Ascending aorta (tissue), 2 donors: ENCODE measurements at regions of chr1 and their contacts with region 1.

Region 1: DNA sequence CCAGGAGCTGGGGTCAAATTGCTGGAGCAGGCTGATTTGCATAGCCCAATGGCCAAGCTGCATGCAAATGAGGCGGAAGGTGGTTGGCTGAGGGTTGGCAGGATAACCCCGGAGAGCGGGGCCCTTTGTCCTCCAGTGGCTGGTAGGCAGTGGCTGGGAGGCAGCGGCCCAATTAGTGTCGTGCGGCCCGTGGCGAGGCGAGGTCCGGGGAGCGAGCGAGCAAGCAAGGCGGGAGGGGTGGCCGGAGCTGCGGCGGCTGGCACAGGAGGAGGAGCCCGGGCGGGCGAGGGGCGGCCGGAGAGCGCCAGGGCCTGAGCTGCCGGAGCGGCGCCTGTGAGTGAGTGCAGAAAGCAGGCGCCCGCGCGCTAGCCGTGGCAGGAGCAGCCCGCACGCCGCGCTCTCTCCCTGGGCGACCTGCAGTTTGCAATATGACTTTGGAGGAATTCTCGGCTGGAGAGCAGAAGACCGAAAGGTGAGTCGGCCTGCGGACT is at the start of gene GADD45A:
- DNase-seq: peak; percentile 97 to 100
- H3K4me3 ChIP-seq: peak within 1 kb of the TSS; percentile 92 to 94
- H3K27ac ChIP-seq: peak within 1 kb of the TSS; percentile 96 to 99
- H3K4me1 ChIP-seq: peaks cover 3 to 20% of the 10 kb centered on the region in 2 donors
- H3K27me3 ChIP-seq: no peaks in the 10 kb centered on the region
- CTCF ChIP-seq: peak in 1 of 3 experiments; percentile 1
- total RNA-seq, gene GADD45A: 111 TPM

Region 2: DNA sequence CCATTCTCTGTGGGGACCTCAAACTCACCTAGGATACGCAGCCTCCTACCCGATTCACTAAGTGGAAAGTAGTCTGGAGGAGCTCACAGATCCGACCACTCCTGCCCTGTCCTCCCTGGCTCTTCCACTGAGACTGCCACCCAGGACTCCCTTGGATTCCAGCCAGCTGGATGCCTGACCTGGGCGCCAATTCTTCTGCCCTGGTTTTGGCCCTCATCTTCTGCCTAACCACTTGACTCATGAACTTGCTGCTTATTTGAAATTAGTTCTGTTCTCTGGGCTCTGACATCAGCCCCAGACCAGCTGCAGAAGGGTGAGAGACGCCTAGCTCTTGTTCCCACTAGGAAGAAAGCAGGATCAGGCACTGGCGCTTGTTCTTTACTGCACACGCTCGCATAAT is 680.0 kb before region 1 on chr1:
- intact Hi-C with region 1: no loop called
- DNase-seq: no peak
- H3K4me3 ChIP-seq: no peak overlapping the region
- H3K27ac ChIP-seq: peak overlapping the region in 1 of 2 donors; percentile 43
- H3K4me1 ChIP-seq: no peaks in the 10 kb centered on the region
- H3K27me3 ChIP-seq: no peaks in the 10 kb centered on the region
- CTCF ChIP-seq: no peak

Region 3: DNA sequence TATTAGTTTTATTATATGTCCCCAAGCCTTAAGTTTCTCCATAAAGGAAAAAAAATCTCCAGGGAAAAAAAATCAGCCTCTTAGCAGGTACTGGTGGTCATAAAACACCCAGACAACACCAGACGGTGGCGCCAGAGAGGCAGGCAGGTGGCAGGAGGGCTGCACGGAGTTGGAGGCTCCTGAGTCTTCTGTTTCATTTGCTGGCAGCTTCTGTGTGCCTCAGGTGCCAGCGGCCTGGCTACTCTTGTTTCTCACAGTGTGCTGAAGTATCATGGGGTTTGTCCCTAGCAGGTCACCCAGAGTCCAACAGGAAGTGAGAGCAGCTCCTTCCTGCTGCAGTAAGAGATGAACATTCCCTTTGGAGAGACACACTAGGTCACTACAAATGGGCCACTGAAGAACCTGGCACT is 123.4 kb before region 1 on chr1:
- intact Hi-C with region 1: loop called (anchors 2 kb)
- DNase-seq: peak; percentile 66 to 96
- H3K4me3 ChIP-seq: no peak overlapping the region
- H3K27ac ChIP-seq: peak overlapping the region in 1 of 2 donors; percentile 30
- H3K4me1 ChIP-seq: peaks cover 2 to 12% of the 10 kb centered on the region in 2 donors
- H3K27me3 ChIP-seq: no peaks in the 10 kb centered on the region
- CTCF ChIP-seq: peak; percentile 85 to 92 (median 91)

Region 4: DNA sequence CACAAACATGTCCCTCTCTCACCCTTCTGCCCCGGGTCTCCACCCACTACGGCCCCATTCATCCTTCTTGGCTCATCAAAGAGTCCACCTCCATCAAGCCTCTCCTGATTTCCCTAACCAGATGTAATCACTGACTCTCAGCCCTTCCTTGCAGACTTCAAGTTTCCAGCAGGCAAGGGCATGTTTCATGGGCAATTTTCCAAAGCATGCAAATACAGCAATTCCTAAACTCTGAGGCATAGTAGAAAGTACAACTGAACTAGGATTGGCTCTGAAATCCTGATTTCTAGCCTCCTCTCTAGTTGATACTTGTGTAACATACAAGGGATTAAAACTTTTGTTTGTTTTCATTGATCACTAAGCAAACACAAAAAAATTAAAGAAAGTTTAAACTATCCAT is 109.3 kb before region 1 on chr1:
- intact Hi-C with region 1: no loop called
- DNase-seq: no peak
- H3K4me3 ChIP-seq: no peak overlapping the region
- H3K27ac ChIP-seq: no peak overlapping the region
- H3K4me1 ChIP-seq: peaks cover 3 to 12% of the 10 kb centered on the region in 2 donors
- H3K27me3 ChIP-seq: no peaks in the 10 kb centered on the region
- CTCF ChIP-seq: no peak

Region 5: GRCh38 chr1:67646145-67647035 is 38.7 kb before region 1 on chr1:
- intact Hi-C with region 1: loop called (anchors 2 kb)
- DNase-seq: no peak
- H3K4me3 ChIP-seq: no peak overlapping the region
- H3K27ac ChIP-seq: peak overlapping the region; percentile 45 to 67
- H3K4me1 ChIP-seq: peaks cover 4 to 15% of the 10 kb centered on the region in 2 donors
- H3K27me3 ChIP-seq: no peaks in the 10 kb centered on the region
- CTCF ChIP-seq: no peak

Region 6: DNA sequence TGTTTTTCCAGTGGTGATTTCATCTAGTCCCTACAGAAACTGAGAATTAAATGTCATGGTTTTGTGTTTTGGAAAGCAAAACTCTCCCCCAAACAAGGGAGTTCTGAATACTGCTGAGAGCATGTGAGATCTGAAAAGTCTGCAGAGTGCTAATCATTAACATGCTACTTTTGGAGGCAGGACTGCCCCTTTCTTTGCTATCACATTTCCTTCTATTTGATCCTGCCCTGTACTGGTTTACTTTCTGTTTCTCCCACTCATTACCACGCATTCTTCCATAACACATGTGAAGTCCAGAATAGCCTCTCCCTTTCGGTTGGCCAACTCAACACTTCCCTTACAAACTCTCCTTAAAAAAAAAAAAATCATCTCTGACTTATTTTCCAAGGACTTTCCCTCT is 63.5 kb after region 1 on chr1:
- intact Hi-C with region 1: loop called (anchors 1 kb)
- DNase-seq: no peak
- H3K4me3 ChIP-seq: peak overlapping the region; percentile 18 to 37
- H3K27ac ChIP-seq: peak overlapping the region; percentile 89 to 94
- H3K4me1 ChIP-seq: peaks cover 16 to 87% of the 10 kb centered on the region in 2 donors
- H3K27me3 ChIP-seq: no peaks in the 10 kb centered on the region
- CTCF ChIP-seq: no peak

Region 7: DNA sequence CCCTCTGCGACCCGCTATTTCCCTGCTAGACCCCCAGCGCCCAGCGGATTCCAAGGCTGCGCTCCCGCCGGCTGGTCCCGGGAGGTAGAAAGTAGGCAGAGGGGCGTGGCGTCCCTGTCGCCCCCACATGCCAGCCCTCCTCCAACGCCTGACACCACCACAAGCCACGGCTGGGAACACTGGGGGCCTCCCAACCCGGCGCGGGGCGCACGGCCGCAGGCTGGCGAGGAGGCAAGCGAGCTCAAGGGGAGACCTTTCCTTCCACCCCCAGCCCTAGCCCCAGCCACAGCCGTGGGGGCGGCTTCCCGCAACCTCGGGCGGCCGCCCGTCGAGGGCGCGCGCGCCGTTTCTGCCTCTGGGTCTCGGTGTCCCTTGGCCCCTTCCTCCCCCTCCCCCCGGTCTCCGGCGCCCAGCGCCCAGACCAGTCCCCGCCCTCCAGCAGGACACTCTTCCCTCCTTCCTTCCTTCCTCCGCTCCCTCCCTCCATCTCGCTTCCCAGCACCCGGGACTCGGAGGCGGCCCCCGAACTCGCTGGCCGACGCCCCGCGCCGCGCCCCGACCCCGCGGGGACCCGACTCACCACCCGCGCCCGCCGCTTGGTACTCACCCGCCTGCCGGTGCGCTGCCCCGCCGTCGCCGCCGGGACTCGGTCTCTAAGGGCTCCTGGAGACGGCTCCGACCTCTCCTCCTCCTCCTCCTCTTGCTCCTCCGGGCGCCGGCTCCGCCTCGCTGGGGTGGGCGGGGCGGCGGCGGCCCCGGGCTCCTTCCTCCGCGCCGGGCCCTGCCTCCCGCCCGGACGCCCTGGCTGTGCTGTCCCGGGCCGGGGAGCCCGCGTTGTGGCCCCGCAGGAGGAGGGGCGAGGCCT is 147.9 kb after region 1 on chr1 and contains the start of gene GNG12:
- intact Hi-C with region 1: loop called (anchors 2 kb)
- DNase-seq: peak; percentile 14 to 81
- H3K4me3 ChIP-seq: peak within 1 kb of the TSS; percentile 70 to 85
- H3K27ac ChIP-seq: peak within 1 kb of the TSS; percentile 93 to 96
- H3K4me1 ChIP-seq: peaks cover 4 to 29% of the 10 kb centered on the region in 2 donors
- H3K27me3 ChIP-seq: no peaks in the 10 kb centered on the region
- CTCF ChIP-seq: no peak
- total RNA-seq, gene GNG12: 71.2 TPM

Region 8: GRCh38 chr1:67931198-67931597 is 246.1 kb after region 1 on chr1:
- intact Hi-C with region 1: no loop called
- DNase-seq: no peak
- H3K4me3 ChIP-seq: no peak overlapping the region
- H3K27ac ChIP-seq: no peak overlapping the region
- H3K4me1 ChIP-seq: no peaks in the 10 kb centered on the region
- H3K27me3 ChIP-seq: no peaks in the 10 kb centered on the region
- CTCF ChIP-seq: no peak

Region 9: DNA sequence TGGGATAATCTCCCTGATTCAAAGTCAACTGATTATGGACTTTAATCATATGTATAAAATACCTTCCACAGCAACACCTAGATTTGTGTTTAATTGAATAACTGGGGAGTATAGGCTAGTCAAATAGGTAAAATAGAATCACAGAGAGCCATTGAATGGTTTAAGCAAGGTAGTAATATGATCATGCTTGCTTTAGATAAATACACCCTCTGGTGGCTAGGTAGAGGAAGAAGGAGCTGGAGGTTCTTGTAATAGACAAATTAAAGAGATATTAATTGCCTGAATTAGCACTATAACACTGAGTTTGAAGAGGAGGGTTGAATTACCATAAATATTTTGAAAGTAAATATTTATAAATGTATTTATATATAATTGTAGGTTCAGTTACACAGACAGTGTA is 325.0 kb after region 1 on chr1:
- intact Hi-C with region 1: no loop called
- DNase-seq: no peak
- H3K4me3 ChIP-seq: no peak overlapping the region
- H3K27ac ChIP-seq: no peak overlapping the region
- H3K4me1 ChIP-seq: no peaks in the 10 kb centered on the region
- H3K27me3 ChIP-seq: no peaks in the 10 kb centered on the region
- CTCF ChIP-seq: peak in 1 of 3 experiments; percentile 34